Natural killer cell (primary cell): ENCODE measurements at regions of chr5 and their contacts with region 1.

Region 1: GRCh38 chr5:68406767-68407241 is 191.2 kb downstream of the PIK3R1 start:
- DNase-seq: peak in 1 of 2 donors; percentile 6
- ATAC-seq: peak in 2 of 3 donors; percentile 19 to 57
- H3K4me3 ChIP-seq: no peak overlapping the region
- H3K4me3 Mint-ChIP-seq: peak overlapping the region; percentile 77
- H3K27ac ChIP-seq: peak overlapping the region; percentile 7
- H3K27ac Mint-ChIP-seq: peak overlapping the region; percentile 67 to 88
- H3K4me1 ChIP-seq: peaks cover 21% of the 10 kb centered on the region
- H3K4me1 Mint-ChIP-seq: peaks cover 30 to 31% of the 10 kb centered on the region in 2 donors
- H3K27me3 ChIP-seq: no peaks in the 10 kb centered on the region
- H3K27me3 Mint-ChIP-seq: no peaks in the 10 kb centered on the region
- CTCF ChIP-seq: no peak

Region 2: DNA sequence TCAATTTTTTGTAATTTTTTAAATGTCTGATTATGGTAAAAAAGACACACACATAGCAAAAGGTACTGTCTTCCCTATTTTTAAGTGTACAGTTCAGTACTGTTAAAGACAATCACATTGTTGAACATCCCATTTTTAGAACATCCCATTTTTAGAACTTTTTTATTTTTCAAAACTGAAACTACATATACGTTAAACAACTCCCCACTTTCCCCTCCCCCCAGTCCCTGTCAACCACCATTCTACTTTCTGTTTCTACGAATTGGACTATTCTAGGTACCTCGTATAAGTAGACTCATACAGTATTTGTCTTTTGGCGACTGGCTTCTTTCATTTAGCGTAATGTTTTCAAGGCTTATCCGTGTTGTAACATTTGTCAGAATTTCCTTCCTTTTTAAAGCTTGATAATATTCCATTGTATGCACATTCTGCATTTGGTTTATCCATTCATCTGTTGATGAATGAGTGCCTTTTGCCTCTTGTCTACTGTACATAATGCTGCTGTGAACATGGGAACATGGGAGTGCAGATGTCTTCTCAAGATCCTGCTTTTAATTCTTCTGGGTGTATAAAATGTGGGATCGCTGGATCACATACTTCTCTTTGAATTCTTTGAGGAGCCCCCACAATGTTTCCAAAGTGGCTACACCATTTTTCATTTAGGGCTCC is 37.2 kb before region 1 on chr5:
- intact Hi-C with region 1: loop called (anchors 5 kb)
- DNase-seq: peak in 1 of 2 donors; percentile 73
- ATAC-seq: peak; percentile 93 to 99 (median 98)
- H3K4me3 ChIP-seq: peak overlapping the region; percentile 6
- H3K4me3 Mint-ChIP-seq: peak overlapping the region; percentile 74
- H3K27ac ChIP-seq: peak overlapping the region; percentile 64
- H3K27ac Mint-ChIP-seq: peak overlapping the region; percentile 84 to 88
- H3K4me1 ChIP-seq: peaks cover 15% of the 10 kb centered on the region
- H3K4me1 Mint-ChIP-seq: peaks cover 37 to 40% of the 10 kb centered on the region in 2 donors
- H3K27me3 ChIP-seq: no peaks in the 10 kb centered on the region
- H3K27me3 Mint-ChIP-seq: no peaks in the 10 kb centered on the region
- CTCF ChIP-seq: no peak